ENCODE measurements at regions of chr1 and their contacts with region 1.

Region 1: DNA sequence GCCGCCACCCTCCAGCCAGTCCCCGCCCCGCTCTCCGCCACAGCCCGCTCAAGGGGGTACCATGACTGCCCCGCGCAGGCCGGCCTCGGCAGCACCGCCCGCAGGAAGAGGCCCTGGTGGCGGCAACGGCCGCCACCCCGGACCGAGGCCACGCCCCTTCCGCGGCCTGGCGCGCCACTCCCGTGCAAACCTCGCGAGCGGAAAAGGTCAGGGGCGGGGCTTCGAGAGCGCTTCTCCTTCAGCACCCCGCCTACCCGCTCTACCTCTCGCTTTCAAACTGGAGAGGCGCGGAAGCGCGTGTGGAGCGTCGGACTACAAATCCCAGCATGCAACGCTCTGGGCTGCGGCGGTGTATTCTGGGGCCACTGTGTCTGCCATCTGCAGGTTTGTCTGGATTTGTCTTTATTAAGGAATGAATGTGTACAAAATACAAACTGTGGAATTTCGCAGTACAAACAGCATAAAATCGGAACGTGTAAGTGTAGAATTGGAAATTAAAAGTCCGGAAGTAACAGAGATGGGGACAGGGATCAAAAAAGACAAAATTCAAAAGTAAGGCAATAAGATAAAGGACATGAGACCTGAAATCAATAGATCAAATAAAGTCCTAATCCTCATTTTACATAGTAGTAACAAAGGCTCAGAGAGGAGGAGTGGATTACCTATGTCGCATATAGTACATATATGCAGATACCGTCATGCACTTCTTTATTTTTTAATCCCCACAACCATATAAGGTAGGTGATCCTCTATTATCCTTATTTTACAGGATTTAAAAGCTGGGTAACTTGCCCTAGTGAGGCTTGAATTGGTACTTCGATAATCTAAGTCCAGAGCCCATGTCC is 464 bp upstream of the ADSS2 start:
- DNase-seq: peak; percentile 98
- H3K4me3 Mint-ChIP-seq: peak overlapping the region; percentile 95
- H3K27ac Mint-ChIP-seq: peak overlapping the region; percentile 96
- H3K4me1 Mint-ChIP-seq: peaks cover 41% of the 10 kb centered on the region
- H3K27me3 Mint-ChIP-seq: no peaks in the 10 kb centered on the region

Region 2: DNA sequence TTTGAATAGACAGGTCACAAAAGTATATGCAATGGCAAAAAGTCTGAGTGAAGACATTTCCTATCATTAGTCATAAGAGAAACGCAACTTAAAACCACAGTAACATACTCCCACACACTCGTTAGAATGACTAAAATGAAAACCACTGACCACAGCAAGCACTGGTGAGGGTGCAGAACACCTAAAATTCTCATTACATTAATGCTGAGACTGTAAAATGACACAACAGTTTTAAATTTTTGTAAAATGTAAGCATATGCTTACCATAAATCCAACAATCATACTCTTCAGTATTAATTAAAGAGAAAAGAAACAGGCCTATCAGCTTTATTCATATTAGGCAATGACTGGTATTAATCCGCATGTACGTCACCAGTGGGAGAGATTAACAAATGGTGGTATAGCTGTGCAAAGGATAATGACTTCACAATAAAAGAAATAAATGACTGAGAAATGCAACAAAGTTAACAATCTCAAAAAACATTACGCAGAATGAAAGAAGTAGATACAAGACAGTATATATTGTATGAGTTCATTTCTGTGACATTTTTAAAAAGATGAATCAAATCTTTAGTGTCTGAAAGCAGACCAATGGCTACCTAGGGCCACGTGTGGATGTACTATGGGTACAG is 855.6 kb before region 1 on chr1:
- intact Hi-C with region 1: loop called (anchors 5 kb)
- DNase-seq: peak; percentile 32
- H3K4me3 Mint-ChIP-seq: peak overlapping the region; percentile 75
- H3K27ac Mint-ChIP-seq: peak overlapping the region; percentile 94
- H3K4me1 Mint-ChIP-seq: peaks cover 32% of the 10 kb centered on the region
- H3K27me3 Mint-ChIP-seq: no peaks in the 10 kb centered on the region

Region 3: DNA sequence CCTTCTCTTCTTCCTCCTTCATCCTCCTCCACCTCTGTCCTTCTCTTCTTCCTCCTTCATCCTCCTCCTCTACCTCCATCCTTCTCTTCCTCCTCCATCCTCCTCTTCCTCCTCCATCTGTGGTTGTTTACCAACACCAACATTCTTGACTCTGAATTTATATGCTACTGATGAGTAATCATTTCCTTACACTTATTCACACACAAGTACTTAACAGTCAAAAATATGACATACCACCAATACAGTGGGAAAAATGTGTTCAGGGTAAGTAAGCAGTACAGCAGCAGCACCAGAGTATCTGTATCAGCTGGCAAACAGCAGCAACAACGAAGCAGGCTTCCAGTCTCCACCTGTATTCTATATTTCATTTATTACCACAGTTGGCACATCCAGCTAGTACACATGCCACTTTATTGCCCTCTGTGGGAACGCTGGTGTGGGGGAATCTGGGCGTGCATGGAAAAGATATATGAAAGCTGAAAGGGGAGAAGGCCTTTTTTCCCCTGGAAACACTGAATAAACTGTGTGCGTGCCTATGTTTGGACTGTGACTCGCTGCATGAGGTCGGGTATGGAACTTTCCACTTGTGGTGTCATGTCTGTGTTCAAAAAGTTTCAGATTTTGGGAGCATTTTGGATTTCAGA is 16.5 kb before region 1 on chr1:
- intact Hi-C with region 1: loop called (anchors 1 kb)
- DNase-seq: no peak
- H3K4me3 Mint-ChIP-seq: peak overlapping the region; percentile 76
- H3K27ac Mint-ChIP-seq: peak overlapping the region; percentile 97
- H3K4me1 Mint-ChIP-seq: peaks cover 38% of the 10 kb centered on the region
- H3K27me3 Mint-ChIP-seq: no peaks in the 10 kb centered on the region

Region 4: GRCh38 chr1:244835276-244836134 is 383.3 kb after region 1 on chr1 and contains the start of gene COX20:
- intact Hi-C with region 1: loop called (anchors 1 kb)
- DNase-seq: peak; percentile 85
- H3K4me3 Mint-ChIP-seq: peak within 1 kb of the TSS; percentile 96
- H3K27ac Mint-ChIP-seq: peak within 1 kb of the TSS; percentile 99
- H3K4me1 Mint-ChIP-seq: peaks cover 56% of the 10 kb centered on the region
- H3K27me3 Mint-ChIP-seq: no peaks in the 10 kb centered on the region
- total RNA-seq, gene COX20: 27.4 and 27.6 TPM in 2 replicates

Region 5: DNA sequence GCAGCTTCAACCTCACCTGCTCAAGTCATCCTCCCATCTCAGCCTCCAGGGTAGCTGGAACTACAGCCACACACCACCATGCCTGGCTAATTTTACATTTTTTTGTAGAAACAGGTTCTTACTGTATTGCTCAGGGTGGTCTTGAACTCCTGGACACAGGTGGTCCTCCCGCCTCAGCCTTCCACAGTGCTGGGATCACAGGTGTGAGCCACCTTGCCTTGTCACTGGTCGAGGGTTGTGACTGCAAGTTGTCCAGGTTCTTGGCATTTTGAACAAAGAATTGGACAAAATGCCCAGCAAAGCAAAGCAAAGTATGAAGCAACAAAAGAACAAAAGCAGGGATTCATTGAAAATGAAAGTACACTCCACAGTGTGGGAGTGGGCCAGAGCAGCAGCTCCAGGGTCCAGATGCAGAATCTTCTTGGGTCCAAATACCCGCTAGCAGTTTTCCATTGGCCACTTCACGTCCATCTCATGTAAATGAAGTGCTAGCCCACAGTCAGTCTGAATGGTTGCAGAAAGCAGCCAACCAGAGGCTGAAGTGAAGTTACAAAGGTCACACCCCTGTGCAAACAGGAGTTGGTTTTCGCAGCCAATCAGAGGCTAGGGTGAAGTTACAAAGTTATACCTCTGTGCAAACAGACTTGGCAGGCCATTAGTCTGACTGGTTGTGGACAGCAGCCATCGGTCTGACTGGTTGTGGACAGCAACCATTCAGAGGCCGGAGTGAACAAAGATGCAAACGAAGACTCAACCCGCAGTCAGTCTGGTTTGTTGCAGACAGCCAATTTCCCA is 593.1 kb after region 1 on chr1:
- intact Hi-C with region 1: loop called (anchors 5 kb)
- DNase-seq: no peak
- H3K4me3 Mint-ChIP-seq: no peak overlapping the region
- H3K27ac Mint-ChIP-seq: no peak overlapping the region
- H3K4me1 Mint-ChIP-seq: peaks cover 6% of the 10 kb centered on the region
- H3K27me3 Mint-ChIP-seq: no peaks in the 10 kb centered on the region